ENCODE measurements at regions of chr1 and their contacts with region 1.

Region 1: DNA sequence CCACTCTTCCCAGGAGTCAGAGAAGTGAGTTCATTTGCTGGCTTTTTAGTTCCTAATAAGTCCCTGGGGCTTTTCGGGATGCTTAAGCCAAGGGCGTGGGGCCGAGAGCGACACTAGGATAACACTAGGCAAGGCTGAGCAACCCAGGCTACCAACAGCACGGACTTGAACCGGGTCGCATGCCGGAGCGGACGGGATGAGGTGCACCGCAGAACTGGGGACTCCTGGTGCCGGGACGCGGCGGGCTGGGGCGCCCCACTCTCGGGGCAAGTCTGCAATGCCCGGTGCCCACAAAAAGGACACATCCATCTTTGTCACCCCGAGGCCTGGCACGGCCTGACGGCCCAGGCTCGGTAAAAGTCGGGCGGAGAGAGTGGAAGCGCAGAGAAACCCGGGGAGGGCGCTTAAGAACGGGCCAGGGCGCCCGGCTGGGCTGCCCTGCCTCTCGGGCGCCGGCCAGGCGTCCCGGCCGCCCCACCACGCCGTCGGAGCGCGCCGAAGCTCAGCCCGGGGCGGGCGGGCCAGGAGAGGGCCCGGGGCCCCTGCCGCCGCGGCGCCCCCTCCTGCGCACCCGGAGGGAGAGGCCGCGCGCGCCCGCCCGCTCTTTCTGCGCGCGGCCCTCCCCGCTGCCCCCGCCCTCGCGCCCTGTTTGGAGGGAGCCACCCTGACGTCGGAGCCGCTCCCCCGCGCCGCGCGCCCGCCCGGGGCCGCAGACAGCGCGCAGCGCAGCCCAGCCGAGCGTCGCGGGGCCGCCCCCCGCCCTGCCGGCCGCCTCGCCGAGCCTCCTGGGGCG is at the start of gene NBL1:
- DNase-seq: no peak
- ATAC-seq: peak; percentile 87
- H3K4me3 ChIP-seq: peak within 1 kb of the TSS; percentile 79 to 80
- H3K27ac ChIP-seq: peak within 1 kb of the TSS; percentile 90
- H3K4me1 ChIP-seq: peaks cover 49% of the 10 kb centered on the region
- H3K27me3 ChIP-seq: no peaks in the 10 kb centered on the region
- CTCF ChIP-seq: peak; percentile 13; the same call in 1 of the 2 replicates
- total RNA-seq, gene NBL1: 191 TPM

Region 2: GRCh38 chr1:19448491-19449439 is 195.0 kb before region 1 on chr1:
- CTCF ChIA-PET with region 1: no interaction called
- POLR2A ChIA-PET with region 1: no interaction called
- in situ Hi-C with region 1: no loop called
- intact Hi-C with region 1: loop called (anchors 10 kb)
- DNase-seq: no peak
- ATAC-seq: peak; percentile 49
- H3K4me3 ChIP-seq: peak overlapping the region in 1 of 2 experiments; percentile 20; a peak in 2 of 4 replicates
- H3K27ac ChIP-seq: peak overlapping the region; percentile 99
- H3K4me1 ChIP-seq: peaks cover 97% of the 10 kb centered on the region
- H3K27me3 ChIP-seq: no peaks in the 10 kb centered on the region
- CTCF ChIP-seq: no peak

Region 3: GRCh38 chr1:19618428-19618827 is 25.4 kb before region 1 on chr1:
- CTCF ChIA-PET with region 1: no interaction called
- POLR2A ChIA-PET with region 1: interaction called, 11 read pairs
- in situ Hi-C with region 1: no loop called
- intact Hi-C with region 1: no loop called
- DNase-seq: no peak
- ATAC-seq: no peak
- H3K4me3 ChIP-seq: no peak overlapping the region
- H3K27ac ChIP-seq: no peak overlapping the region
- H3K4me1 ChIP-seq: peaks cover 16% of the 10 kb centered on the region
- H3K27me3 ChIP-seq: no peaks in the 10 kb centered on the region
- CTCF ChIP-seq: no peak

Measured in Panc1 (cell line).